ENCODE measurements at regions of chr18 and their contacts with region 1.

Region 1: GRCh38 chr18:267688-268552 is at the start of gene THOC1:
- DNase-seq: peak; percentile 93
- H3K4me3 ChIP-seq: peak within 1 kb of the TSS; percentile 71 to 92 (median 83)
- H3K27ac ChIP-seq: peak within 1 kb of the TSS; percentile 97
- H3K4me1 ChIP-seq: peaks cover 11% of the 10 kb centered on the region
- H3K27me3 ChIP-seq: no peaks in the 10 kb centered on the region
- CTCF ChIP-seq: no peak
- POLR2A ChIP-seq: peak; percentile 92
- total RNA-seq, gene THOC1: 43.5 and 50.5 TPM in 2 replicates

Region 2: GRCh38 chr18:158128-159036 is 109.5 kb before region 1 on chr18 and contains the start of gene USP14:
- CTCF ChIA-PET with region 1: no interaction called
- POLR2A ChIA-PET with region 1: no interaction called
- dilution Hi-C with region 1: no loop called
- intact Hi-C with region 1: loop called (anchors 1 kb)
- DNase-seq: peak; percentile 98
- H3K4me3 ChIP-seq: peak within 1 kb of the TSS; percentile 64 to 100 (median 81)
- H3K27ac ChIP-seq: peak within 1 kb of the TSS; percentile 34
- H3K4me1 ChIP-seq: peaks cover 13% of the 10 kb centered on the region
- H3K27me3 ChIP-seq: peaks cover 0 to 1% of the 10 kb centered on the region in 2 experiments
- CTCF ChIP-seq: no peak
- POLR2A ChIP-seq: peak; percentile 54
- total RNA-seq, gene USP14: 86.1 and 98.4 TPM in 2 replicates

Region 3: DNA sequence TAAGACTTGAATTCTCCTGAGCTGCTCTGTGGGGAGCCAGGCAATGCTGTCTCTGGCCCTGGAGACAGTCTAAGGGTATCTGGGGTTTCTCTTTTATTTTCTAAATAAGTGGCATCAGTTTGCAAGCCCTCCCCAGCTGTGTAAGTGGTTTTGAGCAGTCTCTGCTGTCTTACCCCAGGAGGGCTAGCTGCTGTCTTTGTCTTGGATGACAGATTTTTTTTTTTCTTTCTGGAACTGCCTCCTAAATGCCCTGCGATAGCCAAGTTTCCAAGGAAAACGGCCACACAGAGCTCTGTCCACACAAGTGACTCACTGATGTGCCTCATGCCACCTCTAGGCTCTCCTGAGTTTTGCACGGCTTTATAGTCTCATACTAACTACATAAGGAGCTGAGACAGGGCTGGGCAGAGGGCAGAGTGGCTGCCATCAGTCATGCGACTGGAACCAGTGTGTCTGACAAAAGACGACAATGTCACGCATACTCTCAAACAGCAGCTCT is 37.1 kb after region 1 on chr18:
- CTCF ChIA-PET with region 1: no interaction called
- POLR2A ChIA-PET with region 1: no interaction called
- dilution Hi-C with region 1: no loop called
- intact Hi-C with region 1: no loop called
- DNase-seq: no peak
- H3K4me3 ChIP-seq: no peak overlapping the region
- H3K27ac ChIP-seq: no peak overlapping the region
- H3K4me1 ChIP-seq: peaks cover 6% of the 10 kb centered on the region
- H3K27me3 ChIP-seq: peaks cover 0 to 9% of the 10 kb centered on the region in 2 experiments
- CTCF ChIP-seq: no peak
- POLR2A ChIP-seq: no peak

Region 4: GRCh38 chr18:519019-519879 is 251.3 kb after region 1 on chr18:
- CTCF ChIA-PET with region 1: no interaction called
- POLR2A ChIA-PET with region 1: interaction called, 3 read pairs
- dilution Hi-C with region 1: no loop called
- intact Hi-C with region 1: loop called (anchors 5 kb)
- DNase-seq: peak; percentile 81
- H3K4me3 ChIP-seq: no peak overlapping the region
- H3K27ac ChIP-seq: peak overlapping the region; percentile 82
- H3K4me1 ChIP-seq: peaks cover 37% of the 10 kb centered on the region
- H3K27me3 ChIP-seq: no peaks in the 10 kb centered on the region
- CTCF ChIP-seq: no peak
- POLR2A ChIP-seq: no peak

Measured in endothelial cell of umbilical vein (primary cell).